K562 (cell line): ENCODE measurements at regions of chr19 and their contacts with region 1.

Region 1: GRCh38 chr19:10644260-10645007 is 9.7 kb upstream of the ILF3 start:
- DNase-seq: peak; percentile 88 to 92 (median 91)
- ATAC-seq: peak; percentile 96
- H3K4me3 ChIP-seq: no peak overlapping the region
- H3K27ac ChIP-seq: no peak overlapping the region
- H3K4me1 ChIP-seq: peaks cover 8 to 14% of the 10 kb centered on the region in 2 experiments; a peak in 3 of 5 replicates
- H3K27me3 ChIP-seq: no peaks in the 10 kb centered on the region
- CTCF ChIP-seq: peak; percentile 92 to 98 (median 97)
- EP300 ChIP-seq: no peak
- POLR2A ChIP-seq: no peak
- RAD21 ChIP-seq: peak; percentile 96 to 98

Region 2: DNA sequence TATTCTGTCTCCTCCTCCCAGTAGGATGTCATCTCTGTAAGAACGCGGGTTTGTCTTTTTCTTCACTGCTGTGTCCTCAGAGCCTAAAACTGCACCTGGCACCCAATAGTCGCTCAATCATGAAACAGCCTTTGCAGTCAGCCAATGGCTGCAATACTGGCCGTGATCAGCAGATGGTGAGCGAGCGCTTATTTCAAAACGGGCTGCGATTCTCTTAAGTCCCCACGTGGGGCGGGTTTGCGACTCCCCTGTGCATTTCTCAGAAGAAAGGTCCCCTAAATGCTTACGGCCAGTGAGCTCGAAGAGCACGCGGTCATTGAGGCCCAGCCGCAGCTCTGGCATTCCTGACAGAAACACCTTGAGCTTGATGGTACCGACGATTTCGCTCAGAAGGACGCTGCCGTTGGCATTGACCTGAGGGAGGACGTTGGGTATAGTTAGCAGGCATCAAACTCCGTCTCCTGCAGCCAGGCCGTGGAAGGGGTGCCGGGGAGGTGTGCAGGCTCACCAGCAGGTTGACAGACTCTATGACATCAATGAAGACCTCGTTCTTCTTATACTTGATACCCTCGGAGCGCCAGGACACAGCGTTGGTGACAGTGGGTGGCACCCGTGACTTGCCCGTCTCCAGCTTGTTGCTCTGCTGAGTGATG is 63.3 kb before region 1 on chr19:
- CTCF ChIA-PET with region 1: interaction called, 84 read pairs
- POLR2A ChIA-PET with region 1: interaction called, 9 read pairs
- in situ Hi-C with region 1: loop called (anchors 5 kb)
- intact Hi-C with region 1: loop called (anchors 1 kb)
- DNase-seq: peak; percentile 78 to 96 (median 82)
- ATAC-seq: peak; percentile 87
- H3K4me3 ChIP-seq: no peak overlapping the region
- H3K27ac ChIP-seq: no peak overlapping the region
- H3K4me1 ChIP-seq: peaks cover 12 to 19% of the 10 kb centered on the region in 2 experiments; a peak in 4 of 5 replicates
- H3K27me3 ChIP-seq: no peaks in the 10 kb centered on the region
- CTCF ChIP-seq: peak; percentile 100
- EP300 ChIP-seq: no peak
- POLR2A ChIP-seq: no peak
- RAD21 ChIP-seq: peak; percentile 99 to 100